H1 (cell line): ENCODE measurements at regions of chr9 and their contacts with region 1.

Region 1: DNA sequence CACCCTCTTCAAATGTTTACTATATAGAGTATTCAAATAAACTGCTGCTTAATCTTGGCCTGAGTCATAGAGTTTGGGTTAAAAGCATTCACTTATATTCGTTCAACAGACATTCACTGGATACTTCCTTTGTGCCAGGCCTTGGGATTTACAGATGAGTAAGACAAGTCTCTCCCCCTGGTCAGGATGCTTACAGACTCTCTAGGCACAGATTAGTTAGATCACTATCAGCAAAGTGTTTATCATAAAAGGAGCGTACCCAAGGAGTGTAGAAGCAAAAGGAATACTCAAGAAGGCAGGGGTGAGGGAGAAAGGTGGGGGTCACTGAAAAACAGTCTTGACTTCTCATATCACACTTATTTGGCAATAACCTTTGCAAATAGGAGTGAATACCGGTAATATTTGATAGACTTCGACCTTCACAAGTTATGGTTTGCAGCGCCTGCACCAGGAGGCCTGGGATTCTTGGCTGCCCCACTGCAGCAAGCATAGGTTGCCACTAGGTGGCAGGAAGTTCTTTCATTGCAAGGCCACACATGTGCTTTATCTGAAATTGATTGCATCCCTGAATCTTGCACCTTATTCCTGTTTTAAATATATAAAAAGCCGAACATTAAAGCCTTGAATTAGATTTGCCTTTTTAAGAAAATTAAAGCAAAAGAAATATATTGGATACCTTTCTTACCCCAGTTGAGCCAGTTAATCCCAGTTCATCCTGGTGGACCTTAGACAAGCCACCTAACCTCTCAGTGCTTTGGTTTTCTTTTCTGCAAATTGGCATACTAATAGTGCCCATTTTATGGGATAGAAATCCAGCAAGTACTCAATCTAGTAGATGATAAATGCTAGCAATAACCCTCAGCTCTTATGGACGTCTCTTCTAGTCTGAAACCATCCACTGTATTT is 6.5 kb upstream of the TRMT10B start:
- DNase-seq: peak in 1 of 2 experiments; percentile 70
- H3K4me3 ChIP-seq: no peak overlapping the region
- H3K27ac ChIP-seq: no peak overlapping the region
- H3K4me1 ChIP-seq: no peaks in the 10 kb centered on the region
- H3K27me3 ChIP-seq: no peaks in the 10 kb centered on the region
- CTCF ChIP-seq: peak; percentile 84 to 92 (median 84)
- EP300 ChIP-seq: no peak
- POLR2A ChIP-seq: no peak
- RAD21 ChIP-seq: peak; percentile 80 to 81

Region 2: GRCh38 chr9:37706290-37706689 is 40.8 kb before region 1 on chr9:
- CTCF ChIA-PET with region 1: interaction called, 10 read pairs
- POLR2A ChIA-PET with region 1: no interaction called
- DNase-seq: no peak
- H3K4me3 ChIP-seq: no peak overlapping the region
- H3K27ac ChIP-seq: no peak overlapping the region
- H3K4me1 ChIP-seq: no peaks in the 10 kb centered on the region
- H3K27me3 ChIP-seq: no peaks in the 10 kb centered on the region
- CTCF ChIP-seq: no peak
- EP300 ChIP-seq: no peak
- POLR2A ChIP-seq: no peak
- RAD21 ChIP-seq: no peak

Region 3: DNA sequence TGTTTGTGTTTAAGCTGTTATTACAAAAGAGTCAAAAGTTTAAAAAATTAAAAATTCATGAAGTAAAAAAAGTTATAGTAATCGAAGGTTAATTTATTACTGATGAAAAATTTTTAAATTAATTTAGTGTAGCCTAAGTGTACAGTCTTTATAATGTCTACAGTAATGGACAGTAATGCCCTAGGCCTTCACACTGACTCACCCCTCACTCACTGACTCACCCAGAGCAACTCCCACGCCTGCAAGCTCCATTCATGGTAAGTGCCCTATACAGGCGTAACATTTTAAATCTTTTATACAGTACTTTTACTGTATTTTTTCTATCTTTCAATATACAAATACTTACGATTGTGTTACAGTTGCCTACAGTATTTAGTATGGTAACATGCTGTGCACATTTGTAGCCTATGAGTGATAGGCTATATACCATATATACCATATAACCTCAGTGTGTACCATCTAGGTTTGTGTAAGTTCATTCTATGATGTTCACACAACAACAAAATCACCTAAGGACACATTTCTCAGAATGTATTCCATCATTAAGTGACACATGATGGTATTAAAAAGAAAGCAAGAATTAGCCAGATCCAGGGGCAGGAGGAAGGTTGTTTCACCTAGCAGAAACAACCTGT is 93.6 kb after region 1 on chr9:
- CTCF ChIA-PET with region 1: no interaction called
- POLR2A ChIA-PET with region 1: no interaction called
- DNase-seq: no peak
- H3K4me3 ChIP-seq: no peak overlapping the region
- H3K27ac ChIP-seq: no peak overlapping the region
- H3K4me1 ChIP-seq: no peaks in the 10 kb centered on the region
- H3K27me3 ChIP-seq: no peaks in the 10 kb centered on the region
- CTCF ChIP-seq: no peak
- EP300 ChIP-seq: no peak
- POLR2A ChIP-seq: no peak
- RAD21 ChIP-seq: no peak